Mammary epithelial cell (primary cell): ENCODE measurements at regions of chr3 and their contacts with region 1.

Region 1: GRCh38 chr3:138068579-138069174 is 46.7 kb downstream of the DZIP1L start:
- DNase-seq: peak; percentile 53
- H3K4me3 ChIP-seq: no peak overlapping the region
- H3K27ac ChIP-seq: no peak overlapping the region
- H3K4me1 ChIP-seq: peaks cover 7% of the 10 kb centered on the region
- H3K27me3 ChIP-seq: no peaks in the 10 kb centered on the region
- CTCF ChIP-seq: peak; percentile 99 to 100

Region 2: DNA sequence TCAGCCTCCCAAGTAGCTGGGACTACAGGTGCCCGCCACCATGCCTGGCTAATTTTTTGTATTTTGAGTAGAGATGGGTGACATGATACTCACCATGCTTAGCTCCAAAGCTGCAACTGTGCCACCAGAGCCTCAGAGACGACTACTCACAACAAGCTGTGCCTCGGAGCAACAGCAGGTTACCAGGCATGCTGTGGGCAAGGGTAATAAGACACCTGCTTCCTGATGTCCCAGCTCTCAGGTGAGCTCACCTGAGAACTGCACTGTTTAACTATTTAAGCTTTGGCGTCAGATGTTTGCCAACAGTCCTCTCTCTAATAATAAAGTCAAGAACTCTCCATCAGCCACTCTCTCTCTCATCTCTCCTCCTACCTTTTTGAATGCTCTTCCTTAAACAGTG is 39.4 kb after region 1 on chr3:
- CTCF ChIA-PET with region 1: no interaction called
- dilution Hi-C with region 1: loop called (anchors 5 kb)
- in situ Hi-C with region 1: no loop called
- intact Hi-C with region 1: no loop called
- DNase-seq: no peak
- H3K4me3 ChIP-seq: no peak overlapping the region
- H3K27ac ChIP-seq: no peak overlapping the region
- H3K4me1 ChIP-seq: peaks cover 13% of the 10 kb centered on the region
- H3K27me3 ChIP-seq: no peaks in the 10 kb centered on the region
- CTCF ChIP-seq: no peak

Region 3: DNA sequence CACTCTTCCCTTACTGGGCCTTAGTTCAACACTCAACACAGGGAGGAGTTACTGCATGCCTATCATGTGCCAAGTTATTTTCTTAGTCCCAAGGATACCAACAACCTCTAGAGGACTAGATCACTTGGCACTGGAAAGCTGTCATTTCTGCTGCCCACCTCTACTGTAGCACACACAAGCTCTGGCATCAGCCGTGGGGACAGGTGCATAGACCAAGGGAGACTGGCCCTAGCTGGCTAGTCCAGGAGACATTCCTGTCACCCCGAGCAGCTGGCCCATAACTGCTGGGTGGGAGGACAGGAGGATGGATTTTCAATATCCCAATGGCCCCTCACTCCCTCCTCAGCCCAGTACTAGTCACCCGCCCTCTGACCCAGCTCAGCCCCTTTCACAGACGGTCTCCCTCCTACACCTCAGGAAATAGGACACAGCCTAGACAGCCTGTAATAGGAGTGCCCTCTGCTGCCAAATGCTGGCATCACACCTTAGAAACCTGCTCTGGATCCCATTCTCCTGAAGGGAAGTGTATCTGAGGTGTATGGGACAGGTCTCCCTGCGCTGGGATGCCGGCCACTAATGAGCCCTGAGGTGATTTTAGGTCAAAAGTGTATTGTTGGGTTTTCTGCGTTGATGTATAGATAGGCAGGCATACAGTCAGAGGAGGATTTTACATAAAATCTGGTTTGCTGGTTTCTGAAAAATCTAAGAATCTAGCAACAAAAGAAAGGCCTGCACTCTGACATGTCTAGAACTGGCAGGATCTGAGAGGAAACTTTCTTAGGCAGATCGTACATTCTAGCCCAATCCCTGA is 50.1 kb after region 1 on chr3:
- CTCF ChIA-PET with region 1: no interaction called
- dilution Hi-C with region 1: no loop called
- in situ Hi-C with region 1: loop called (anchors 5 kb)
- intact Hi-C with region 1: loop called (anchors 1 kb)
- DNase-seq: peak; percentile 67
- H3K4me3 ChIP-seq: no peak overlapping the region
- H3K27ac ChIP-seq: no peak overlapping the region
- H3K4me1 ChIP-seq: peaks cover 8% of the 10 kb centered on the region
- H3K27me3 ChIP-seq: no peaks in the 10 kb centered on the region
- CTCF ChIP-seq: peak; percentile 89 to 95

Region 4: DNA sequence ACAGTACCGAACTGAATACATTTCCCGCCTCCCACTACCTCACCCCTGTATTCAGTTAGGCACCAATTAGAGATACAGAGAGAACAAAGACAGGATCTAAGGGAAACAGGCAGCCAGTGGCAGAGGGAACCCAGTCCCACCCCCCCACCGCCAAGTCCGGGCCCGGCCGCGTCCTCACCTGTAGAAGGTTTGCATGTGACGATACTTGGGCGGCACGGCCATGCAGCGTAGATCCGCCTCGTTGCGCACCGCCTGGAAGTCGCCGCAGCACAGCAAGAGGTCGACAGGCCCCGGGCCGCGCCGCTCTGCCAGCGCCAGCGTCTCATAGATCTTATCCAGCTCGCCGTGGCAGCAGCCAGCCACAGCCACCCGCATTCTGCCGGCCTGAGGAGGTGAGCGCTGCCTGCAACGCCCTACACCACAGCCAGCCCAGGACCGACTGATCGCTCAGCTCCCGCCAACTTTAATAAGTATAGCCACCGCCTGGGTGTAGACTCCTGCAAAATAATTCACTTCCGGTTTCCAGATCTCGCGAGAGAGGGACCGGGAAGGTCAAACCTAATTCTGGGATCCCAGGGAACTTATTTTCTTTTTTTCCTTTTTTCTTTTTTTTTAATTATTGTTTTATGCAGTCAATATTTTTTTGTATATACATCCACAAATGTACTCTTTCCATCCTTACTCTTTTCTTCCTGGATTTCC is 105.9 kb after region 1 on chr3 and contains the start of gene DBR1:
- CTCF ChIA-PET with region 1: no interaction called
- dilution Hi-C with region 1: no loop called
- in situ Hi-C with region 1: no loop called
- intact Hi-C with region 1: loop called (anchors 2 kb)
- DNase-seq: peak; percentile 79
- H3K4me3 ChIP-seq: peak within 1 kb of the TSS; percentile 80 to 98 (median 81)
- H3K27ac ChIP-seq: peak within 1 kb of the TSS; percentile 56
- H3K4me1 ChIP-seq: peaks cover 3% of the 10 kb centered on the region
- H3K27me3 ChIP-seq: no peaks in the 10 kb centered on the region
- CTCF ChIP-seq: no peak
- total RNA-seq, gene DBR1: 12.5 to 16.7 TPM

Region 5: GRCh38 chr3:138426226-138426625 is 357.5 kb after region 1 on chr3:
- CTCF ChIA-PET with region 1: no interaction called
- dilution Hi-C with region 1: no loop called
- in situ Hi-C with region 1: no loop called
- intact Hi-C with region 1: loop called (anchors 10 kb)
- DNase-seq: peak; percentile 19
- H3K4me3 ChIP-seq: no peak overlapping the region
- H3K27ac ChIP-seq: no peak overlapping the region
- H3K4me1 ChIP-seq: no peaks in the 10 kb centered on the region
- H3K27me3 ChIP-seq: no peaks in the 10 kb centered on the region
- CTCF ChIP-seq: no peak